ENCODE measurements at regions of chr7 and their contacts with region 1.

Region 1: GRCh38 chr7:95251966-95252365 is 72.4 kb downstream of the PON1 start:
- DNase-seq: no peak
- H3K4me3 ChIP-seq: no peak overlapping the region
- H3K27ac ChIP-seq: no peak overlapping the region
- H3K4me1 ChIP-seq: no peaks in the 10 kb centered on the region
- H3K27me3 ChIP-seq: no peaks in the 10 kb centered on the region
- CTCF ChIP-seq: no peak

Region 2: GRCh38 chr7:95263785-95264575 is 12.0 kb after region 1 on chr7:
- CTCF ChIA-PET with region 1: interaction called, 13 read pairs
- POLR2A ChIA-PET with region 1: no interaction called
- intact Hi-C with region 1: no loop called
- DNase-seq: peak; percentile 5
- H3K4me3 ChIP-seq: no peak overlapping the region
- H3K27ac ChIP-seq: no peak overlapping the region
- H3K4me1 ChIP-seq: no peaks in the 10 kb centered on the region
- H3K27me3 ChIP-seq: no peaks in the 10 kb centered on the region
- CTCF ChIP-seq: no peak